ENCODE measurements at regions of chr7 and their contacts with region 1.

Region 1: GRCh38 chr7:130182990-130183389 is 22.2 kb downstream of the TMEM209 start:
- DNase-seq: no peak
- H3K4me3 Mint-ChIP-seq: no peak overlapping the region
- H3K27ac Mint-ChIP-seq: peak overlapping the region; percentile 62
- H3K4me1 Mint-ChIP-seq: peaks cover 35% of the 10 kb centered on the region
- H3K27me3 Mint-ChIP-seq: no peaks in the 10 kb centered on the region

Region 2: DNA sequence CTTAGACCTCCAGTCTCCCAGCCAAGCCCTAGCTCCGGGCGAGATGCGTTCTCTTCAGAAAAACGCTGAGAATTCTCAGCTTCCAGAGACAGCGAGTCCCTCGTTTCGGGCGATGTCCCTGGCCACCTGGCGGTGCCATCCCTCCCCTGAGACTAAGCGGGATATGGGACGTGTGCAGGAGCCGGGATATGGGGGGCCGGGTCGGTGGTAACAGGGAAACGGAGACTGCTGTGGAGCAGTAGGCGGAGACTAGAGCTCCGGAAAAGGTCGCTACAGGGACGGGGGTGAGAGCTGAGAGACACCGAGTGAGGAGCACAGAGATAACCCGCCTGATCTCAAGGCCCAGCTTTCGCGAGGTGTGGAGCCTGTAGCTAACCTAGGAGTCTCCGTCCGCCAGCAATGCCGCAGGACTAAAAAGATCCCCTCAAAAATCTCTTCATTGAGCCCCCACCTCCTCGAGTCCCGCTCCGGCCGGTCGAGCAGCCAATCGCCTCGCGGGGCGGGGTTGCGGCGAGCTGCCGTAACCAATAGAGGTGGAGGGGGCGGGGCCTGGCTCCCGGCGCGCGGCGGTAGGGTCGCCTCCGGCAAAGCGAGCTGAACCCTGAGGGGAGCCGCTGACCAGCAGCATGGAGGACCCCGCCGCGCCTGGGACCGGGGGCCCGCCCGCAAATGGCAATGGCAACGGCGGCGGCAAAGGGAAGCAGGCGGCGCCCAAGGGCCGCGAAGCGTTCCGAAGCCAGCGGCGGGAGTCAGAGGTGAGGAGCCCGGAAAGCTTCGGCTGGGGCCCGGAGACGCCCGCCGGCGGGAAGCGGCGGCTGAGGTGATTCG is 748.9 kb before region 1 on chr7 and contains the start of gene STRIP2:
- CTCF ChIA-PET with region 1: no interaction called
- POLR2A ChIA-PET with region 1: no interaction called
- intact Hi-C with region 1: loop called (anchors 10 kb)
- DNase-seq: peak; percentile 95
- H3K4me3 Mint-ChIP-seq: peak within 1 kb of the TSS; percentile 86
- H3K27ac Mint-ChIP-seq: peak within 1 kb of the TSS; percentile 83
- H3K4me1 Mint-ChIP-seq: peaks cover 28% of the 10 kb centered on the region
- H3K27me3 Mint-ChIP-seq: peaks cover 6% of the 10 kb centered on the region
- total RNA-seq, gene STRIP2: 56.1 to 62.0 TPM

Region 3: GRCh38 chr7:129952653-129953560 is 230.1 kb before region 1 on chr7 and contains the start of gene UBE2H:
- CTCF ChIA-PET with region 1: no interaction called
- POLR2A ChIA-PET with region 1: no interaction called
- intact Hi-C with region 1: loop called (anchors 5 kb)
- DNase-seq: peak; percentile 94
- H3K4me3 Mint-ChIP-seq: peak within 1 kb of the TSS; percentile 87
- H3K27ac Mint-ChIP-seq: peak within 1 kb of the TSS; percentile 90
- H3K4me1 Mint-ChIP-seq: peaks cover 7% of the 10 kb centered on the region
- H3K27me3 Mint-ChIP-seq: no peaks in the 10 kb centered on the region
- total RNA-seq, gene UBE2H: 33.6 to 37.1 TPM

Region 4: DNA sequence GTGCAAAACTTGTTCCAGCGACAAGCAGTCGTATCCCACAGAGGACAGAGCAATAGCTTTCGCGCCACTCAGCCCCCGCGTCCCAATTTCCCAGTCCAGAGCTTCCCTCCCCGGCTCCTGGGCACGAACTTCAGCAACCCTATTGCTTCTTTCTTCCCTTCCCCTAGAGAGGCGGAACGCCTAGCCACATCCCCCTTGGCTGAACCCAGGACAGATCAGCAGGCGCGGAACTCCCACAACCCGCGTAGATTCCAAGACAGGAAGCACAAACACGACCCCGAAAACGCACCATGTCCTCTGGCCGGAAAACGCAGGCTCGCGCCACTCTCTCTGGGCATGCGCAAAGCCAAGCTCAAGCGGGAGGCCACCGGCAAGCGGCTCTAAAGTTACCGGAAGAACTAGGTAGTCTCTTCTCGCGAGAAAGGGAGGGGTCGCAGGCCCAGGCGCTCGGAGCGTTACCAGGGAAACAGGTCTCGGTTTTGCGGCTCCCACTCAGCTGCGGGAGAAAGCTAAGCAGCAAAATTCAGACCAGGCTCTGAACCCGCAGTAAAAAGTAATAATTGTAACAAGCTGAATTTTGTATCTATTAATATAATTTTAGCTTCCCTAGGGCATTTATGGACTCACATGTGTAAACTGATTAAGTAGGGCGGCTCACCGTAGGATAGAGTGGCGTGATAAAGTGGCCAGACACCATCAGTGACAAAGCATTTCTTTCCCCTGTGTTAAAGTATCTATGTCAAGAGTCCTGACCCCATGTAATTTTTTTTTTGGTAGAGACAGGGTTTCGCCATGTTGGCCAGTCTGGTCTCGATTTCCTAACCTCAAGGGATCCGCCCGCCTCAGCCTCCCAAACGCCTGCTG is 22.3 kb after region 1 on chr7 and contains the start of gene TMEM209:
- CTCF ChIA-PET with region 1: interaction called, 4 read pairs
- POLR2A ChIA-PET with region 1: interaction called, 14 read pairs
- intact Hi-C with region 1: loop called (anchors 1 kb)
- DNase-seq: peak; percentile 97
- H3K4me3 Mint-ChIP-seq: peak within 1 kb of the TSS; percentile 96
- H3K27ac Mint-ChIP-seq: peak within 1 kb of the TSS; percentile 98
- H3K4me1 Mint-ChIP-seq: peaks cover 21% of the 10 kb centered on the region
- H3K27me3 Mint-ChIP-seq: peaks cover 2% of the 10 kb centered on the region
- total RNA-seq, gene TMEM209: 35.5 to 35.9 TPM

Region 5: DNA sequence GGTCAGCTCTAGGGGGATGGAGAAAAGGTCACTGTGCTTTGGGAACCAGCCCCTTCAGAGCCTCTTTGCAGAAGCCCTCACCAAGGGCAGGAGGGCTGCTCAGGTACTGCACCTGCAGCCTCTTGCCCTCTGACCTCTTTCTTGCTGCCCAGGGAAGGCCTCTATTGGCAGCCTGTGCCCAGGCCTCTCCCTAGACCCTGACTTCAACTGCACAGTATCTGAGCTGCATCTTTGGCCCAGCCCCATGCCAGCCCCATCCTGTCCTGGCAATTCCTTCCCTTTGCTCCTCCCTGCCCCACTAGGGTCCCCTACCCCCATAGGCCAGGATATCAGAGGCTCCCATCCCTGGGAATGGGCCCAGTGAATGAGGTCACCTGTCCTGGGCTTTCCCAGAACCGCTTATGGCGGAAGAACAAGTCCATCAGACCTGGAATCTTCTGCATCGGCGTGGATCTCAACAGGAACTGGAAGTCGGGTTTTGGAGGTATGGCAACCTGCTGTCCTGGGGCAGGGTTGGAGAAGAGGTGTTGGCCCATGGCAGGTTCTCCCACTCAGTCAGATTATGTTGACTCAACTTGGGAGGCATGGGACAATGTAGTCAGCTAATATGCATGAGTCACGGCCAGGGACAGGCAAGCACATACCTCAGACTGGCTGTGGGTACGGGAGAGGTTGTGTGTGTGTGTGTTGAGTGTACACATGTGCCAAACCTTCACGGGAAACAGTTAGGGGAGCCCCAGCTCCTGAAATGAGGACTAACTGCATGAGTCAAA is 180.2 kb after region 1 on chr7:
- CTCF ChIA-PET with region 1: no interaction called
- POLR2A ChIA-PET with region 1: no interaction called
- intact Hi-C with region 1: loop called (anchors 1 kb)
- DNase-seq: peak; percentile 87
- H3K4me3 Mint-ChIP-seq: no peak overlapping the region
- H3K27ac Mint-ChIP-seq: no peak overlapping the region
- H3K4me1 Mint-ChIP-seq: peaks cover 22% of the 10 kb centered on the region
- H3K27me3 Mint-ChIP-seq: peaks cover 2% of the 10 kb centered on the region

Region 6: DNA sequence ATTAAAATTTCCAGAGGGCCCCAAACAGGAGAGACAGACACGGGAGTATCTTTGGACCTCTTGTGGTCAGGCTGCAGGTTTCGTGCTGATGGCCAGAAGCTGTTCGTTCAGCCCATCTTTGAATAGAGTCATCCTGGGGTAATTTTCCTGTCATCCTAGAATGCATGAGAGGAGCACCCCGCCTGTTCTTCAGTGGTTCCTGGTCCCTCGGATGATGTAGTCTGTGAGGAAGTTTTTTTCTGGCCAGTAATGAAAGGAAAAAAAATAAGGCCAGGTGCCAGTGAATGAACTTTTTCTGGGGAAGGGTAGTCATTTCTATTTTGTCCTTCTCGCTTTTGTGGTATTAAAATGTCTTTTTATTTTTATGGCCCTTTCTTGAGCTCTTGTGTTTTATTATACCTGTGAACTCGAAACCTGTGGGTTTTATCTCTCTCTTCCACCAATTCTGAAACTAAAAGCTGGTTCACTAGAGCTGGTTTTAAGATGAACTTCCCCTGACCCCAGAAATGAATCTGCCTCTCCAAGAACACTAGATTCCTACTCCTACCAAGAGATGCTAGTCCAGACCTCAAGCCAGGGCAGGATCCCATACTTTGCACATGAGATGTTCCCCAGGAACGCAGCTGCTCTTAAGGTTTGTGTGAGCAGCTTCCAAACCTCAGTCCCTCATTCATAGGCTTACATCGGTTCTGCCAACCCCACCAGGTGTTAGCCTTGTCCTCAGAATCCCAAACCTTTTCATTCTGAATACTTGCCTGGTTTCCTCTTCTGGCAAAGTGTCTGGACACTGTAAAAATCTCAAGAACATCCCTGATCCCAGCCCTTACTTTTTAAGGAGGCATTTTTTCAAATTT is 293.5 kb after region 1 on chr7:
- CTCF ChIA-PET with region 1: no interaction called
- POLR2A ChIA-PET with region 1: no interaction called
- intact Hi-C with region 1: no loop called
- DNase-seq: no peak
- H3K4me3 Mint-ChIP-seq: no peak overlapping the region
- H3K27ac Mint-ChIP-seq: no peak overlapping the region
- H3K4me1 Mint-ChIP-seq: no peaks in the 10 kb centered on the region
- H3K27me3 Mint-ChIP-seq: peaks cover 7% of the 10 kb centered on the region

Region 7: DNA sequence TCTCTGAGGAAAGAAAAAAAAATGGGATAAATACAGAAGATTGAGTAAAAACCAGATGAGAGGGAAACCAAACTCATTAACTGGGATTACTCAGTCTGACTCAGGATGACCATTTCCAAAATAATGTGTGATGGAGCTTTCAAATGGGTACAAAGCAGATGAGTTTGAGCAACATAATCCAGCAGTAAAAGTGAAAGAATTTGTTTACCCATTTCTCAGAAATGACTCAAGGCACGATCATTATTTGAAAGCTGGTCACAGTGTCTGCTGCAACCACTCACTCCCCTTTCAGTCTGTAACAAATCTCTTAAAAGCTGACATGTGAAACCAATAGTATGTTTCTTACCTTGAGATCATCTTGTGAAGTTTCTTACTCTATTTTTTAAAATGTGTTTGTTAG is 655.7 kb after region 1 on chr7:
- CTCF ChIA-PET with region 1: no interaction called
- POLR2A ChIA-PET with region 1: no interaction called
- intact Hi-C with region 1: loop called (anchors 5 kb)
- DNase-seq: peak; percentile 45
- H3K4me3 Mint-ChIP-seq: no peak overlapping the region
- H3K27ac Mint-ChIP-seq: no peak overlapping the region
- H3K4me1 Mint-ChIP-seq: peaks cover 19% of the 10 kb centered on the region
- H3K27me3 Mint-ChIP-seq: peaks cover 39% of the 10 kb centered on the region